ENCODE measurements at regions of chr1 and their contacts with region 1.

Region 1: DNA sequence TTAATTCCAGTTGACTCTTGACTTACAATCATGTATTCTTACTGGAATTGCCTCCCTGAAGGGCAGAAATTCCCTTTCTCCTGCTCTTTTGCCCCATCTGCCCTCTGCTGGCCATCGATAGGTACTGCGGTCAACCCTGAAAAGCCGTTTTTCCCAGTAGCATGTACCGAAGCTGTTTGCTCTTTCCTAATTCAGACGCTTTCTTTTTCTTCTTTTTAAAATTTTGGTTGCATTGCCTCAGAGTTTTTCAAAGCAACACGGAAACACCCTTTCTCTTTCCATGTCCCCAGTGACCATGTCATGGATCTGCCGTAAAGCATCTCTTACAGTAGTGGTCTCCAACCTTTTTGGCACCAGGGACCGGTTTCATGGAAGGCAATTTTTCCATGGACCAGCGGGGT is 164.2 kb upstream of the C1orf21 start:
- DNase-seq: peak; percentile 55
- ATAC-seq: peak; percentile 88
- H3K4me3 ChIP-seq: no peak overlapping the region; the same call in 1 of the 2 replicates
- H3K27ac ChIP-seq: no peak overlapping the region
- H3K4me1 ChIP-seq: no peaks in the 10 kb centered on the region
- H3K27me3 ChIP-seq: peaks cover 11% of the 10 kb centered on the region
- CTCF ChIP-seq: peak; percentile 89
- POLR2A ChIP-seq: no peak; the same call in 1 of the 2 replicates
- RAD21 ChIP-seq: peak; percentile 87

Region 2: GRCh38 chr1:183956559-183957188 is 266.0 kb before region 1 on chr1:
- CTCF ChIA-PET with region 1: no interaction called
- POLR2A ChIA-PET with region 1: no interaction called
- dilution Hi-C with region 1: no loop called
- in situ Hi-C with region 1: no loop called
- intact Hi-C with region 1: loop called (anchors 10 kb)
- DNase-seq: peak; percentile 87
- ATAC-seq: peak; percentile 99
- H3K4me3 ChIP-seq: no peak overlapping the region
- H3K27ac ChIP-seq: no peak overlapping the region
- H3K4me1 ChIP-seq: peaks cover 6% of the 10 kb centered on the region
- H3K27me3 ChIP-seq: no peaks in the 10 kb centered on the region; the same call in 1 of the 2 replicates
- CTCF ChIP-seq: peak; percentile 46
- POLR2A ChIP-seq: no peak
- RAD21 ChIP-seq: peak; percentile 61

Region 3: GRCh38 chr1:184082541-184083415 is 139.9 kb before region 1 on chr1:
- CTCF ChIA-PET with region 1: interaction called, 5 read pairs
- POLR2A ChIA-PET with region 1: no interaction called
- dilution Hi-C with region 1: no loop called
- in situ Hi-C with region 1: loop called (anchors 5 kb)
- intact Hi-C with region 1: no loop called
- DNase-seq: no peak
- ATAC-seq: no peak
- H3K4me3 ChIP-seq: no peak overlapping the region
- H3K27ac ChIP-seq: no peak overlapping the region
- H3K4me1 ChIP-seq: 0 out of 2 replicates have a peak, but pooled peaks cover 2% of the 10 kb centered on the region
- H3K27me3 ChIP-seq: no peaks in the 10 kb centered on the region
- CTCF ChIP-seq: no peak
- POLR2A ChIP-seq: no peak
- RAD21 ChIP-seq: no peak

Region 4: GRCh38 chr1:184270556-184270955 is 47.9 kb after region 1 on chr1:
- CTCF ChIA-PET with region 1: no interaction called
- POLR2A ChIA-PET with region 1: no interaction called
- dilution Hi-C with region 1: no loop called
- in situ Hi-C with region 1: no loop called
- intact Hi-C with region 1: no loop called
- DNase-seq: peak; percentile 20
- ATAC-seq: peak; percentile 63
- H3K4me3 ChIP-seq: no peak overlapping the region
- H3K27ac ChIP-seq: no peak overlapping the region
- H3K4me1 ChIP-seq: peaks cover 5% of the 10 kb centered on the region; the same call in 1 of the 2 replicates
- H3K27me3 ChIP-seq: no peaks in the 10 kb centered on the region
- CTCF ChIP-seq: no peak
- POLR2A ChIP-seq: no peak
- RAD21 ChIP-seq: no peak

Region 5: GRCh38 chr1:184563308-184563707 is 340.7 kb after region 1 on chr1:
- CTCF ChIA-PET with region 1: no interaction called
- POLR2A ChIA-PET with region 1: no interaction called
- dilution Hi-C with region 1: no loop called
- in situ Hi-C with region 1: no loop called
- intact Hi-C with region 1: loop called (anchors 5 kb)
- DNase-seq: peak; percentile 40
- ATAC-seq: peak; percentile 42; the same call in 1 of the 2 replicates
- H3K4me3 ChIP-seq: no peak overlapping the region
- H3K27ac ChIP-seq: no peak overlapping the region
- H3K4me1 ChIP-seq: peaks cover 3% of the 10 kb centered on the region; the same call in 1 of the 2 replicates
- H3K27me3 ChIP-seq: no peaks in the 10 kb centered on the region
- CTCF ChIP-seq: peak; percentile 66
- POLR2A ChIP-seq: no peak
- RAD21 ChIP-seq: peak; percentile 65

Region 6: DNA sequence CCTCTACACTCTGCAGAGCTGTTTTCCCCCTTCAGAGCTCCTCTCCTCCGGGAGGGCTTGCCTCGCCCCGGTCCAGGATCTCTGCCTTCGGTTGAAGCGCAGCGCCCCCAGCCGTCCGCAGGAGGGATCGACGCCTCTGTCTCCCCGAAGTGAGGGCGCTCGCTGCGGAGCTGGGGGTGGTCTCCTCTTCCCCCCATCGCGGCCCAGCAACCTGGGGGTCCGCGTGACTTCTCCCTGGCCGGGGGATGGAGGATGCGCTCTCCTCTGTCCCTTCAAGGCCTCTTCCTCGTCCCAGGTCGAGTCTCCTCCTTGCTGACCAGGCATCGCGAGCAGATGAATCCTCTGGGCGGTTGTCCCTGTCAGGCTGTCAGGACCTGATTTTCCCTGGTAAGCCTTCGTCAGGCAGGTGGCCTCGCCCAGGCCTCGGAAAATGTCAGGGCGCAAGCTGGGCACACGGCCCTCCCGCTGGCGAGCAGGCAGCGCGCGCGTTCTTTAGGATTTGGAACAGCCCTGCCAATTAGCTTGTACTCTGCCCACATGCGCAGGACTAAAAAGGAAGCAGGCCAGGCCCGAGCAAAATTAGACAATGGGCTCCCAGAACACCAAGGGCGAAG is 441.5 kb after region 1 on chr1:
- CTCF ChIA-PET with region 1: interaction called, 3 read pairs
- POLR2A ChIA-PET with region 1: no interaction called
- dilution Hi-C with region 1: no loop called
- in situ Hi-C with region 1: loop called (anchors 10 kb)
- intact Hi-C with region 1: loop called (anchors 5 kb)
- DNase-seq: peak; percentile 57
- ATAC-seq: peak; percentile 98
- H3K4me3 ChIP-seq: 0 out of 2 replicates have a peak overlapping the region, but pooled peaks have one; percentile 12
- H3K27ac ChIP-seq: no peak overlapping the region
- H3K4me1 ChIP-seq: no peaks in the 10 kb centered on the region
- H3K27me3 ChIP-seq: peaks cover 13% of the 10 kb centered on the region
- CTCF ChIP-seq: peak; percentile 81
- POLR2A ChIP-seq: no peak
- RAD21 ChIP-seq: peak; percentile 90